RWPE1 (cell line): ENCODE measurements at regions of chr11 and their contacts with region 1.

Region 1: GRCh38 chr11:65187971-65188461 is 6.3 kb downstream of the CAPN1 start:
- DNase-seq: no peak
- H3K27ac ChIP-seq: no peak overlapping the region
- CTCF ChIP-seq: no peak

Region 2: GRCh38 chr11:65121865-65122581 is 66.0 kb before region 1 on chr11 and contains the starts of genes FAU and MRPL49:
- CTCF ChIA-PET with region 1: interaction called, 12 read pairs
- POLR2A ChIA-PET with region 1: no interaction called
- DNase-seq: peak; percentile 92
- H3K27ac ChIP-seq: peak within 1 kb of the TSS; percentile 88
- CTCF ChIP-seq: no peak